ENCODE measurements at regions of chr11 and their contacts with region 1.

Region 1: GRCh38 chr11:9351321-9351881 is 33.1 kb upstream of the IPO7 start:
- DNase-seq: no peak

Region 2: DNA sequence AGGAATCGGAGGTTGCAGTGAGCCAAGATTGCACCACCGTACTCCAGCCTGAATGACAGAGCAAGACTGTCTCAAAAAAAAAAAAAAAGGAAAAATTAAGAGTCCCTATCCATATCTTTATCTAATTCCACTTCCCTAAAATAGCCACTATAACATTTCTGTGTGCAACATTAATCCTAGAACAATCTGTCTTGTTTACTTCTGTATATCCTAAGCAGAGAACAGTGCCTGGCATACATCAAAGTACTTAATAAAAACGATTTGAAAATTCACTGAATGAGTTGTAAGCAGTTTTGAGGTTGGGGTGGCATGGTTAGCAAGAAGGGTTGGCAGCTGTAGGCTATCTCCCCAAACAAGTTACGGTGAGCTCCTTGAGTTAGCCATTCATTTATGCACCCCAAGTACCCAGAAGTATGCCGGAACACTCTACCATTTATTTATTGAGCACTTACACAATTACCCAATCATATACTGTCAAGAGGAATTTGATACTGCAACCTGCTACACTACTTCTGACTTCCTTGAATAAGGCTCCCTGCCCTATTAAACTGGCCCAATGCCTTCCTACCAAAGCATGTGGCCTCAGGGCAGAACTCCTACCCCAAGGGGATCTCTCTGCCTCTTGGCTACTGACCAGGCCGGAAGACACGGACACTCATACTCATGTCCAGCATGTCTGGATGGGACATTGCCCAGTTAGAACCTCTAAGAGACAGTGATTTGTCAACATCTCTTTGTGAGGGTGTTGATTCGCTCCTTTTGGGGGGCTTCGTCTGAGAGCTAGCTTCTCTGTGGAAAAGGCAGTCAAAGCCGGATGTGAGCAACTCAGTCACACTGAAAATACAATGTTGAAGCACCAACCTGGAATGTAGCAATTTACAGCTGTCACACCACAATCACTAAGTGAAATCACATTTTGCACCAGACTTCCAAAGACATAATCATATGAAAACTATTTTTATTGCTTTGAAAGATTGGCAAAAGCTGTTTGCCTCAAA is 20.7 kb before region 1 on chr11:
- CTCF ChIA-PET with region 1: no interaction called
- POLR2A ChIA-PET with region 1: no interaction called
- DNase-seq: no peak

Region 3: DNA sequence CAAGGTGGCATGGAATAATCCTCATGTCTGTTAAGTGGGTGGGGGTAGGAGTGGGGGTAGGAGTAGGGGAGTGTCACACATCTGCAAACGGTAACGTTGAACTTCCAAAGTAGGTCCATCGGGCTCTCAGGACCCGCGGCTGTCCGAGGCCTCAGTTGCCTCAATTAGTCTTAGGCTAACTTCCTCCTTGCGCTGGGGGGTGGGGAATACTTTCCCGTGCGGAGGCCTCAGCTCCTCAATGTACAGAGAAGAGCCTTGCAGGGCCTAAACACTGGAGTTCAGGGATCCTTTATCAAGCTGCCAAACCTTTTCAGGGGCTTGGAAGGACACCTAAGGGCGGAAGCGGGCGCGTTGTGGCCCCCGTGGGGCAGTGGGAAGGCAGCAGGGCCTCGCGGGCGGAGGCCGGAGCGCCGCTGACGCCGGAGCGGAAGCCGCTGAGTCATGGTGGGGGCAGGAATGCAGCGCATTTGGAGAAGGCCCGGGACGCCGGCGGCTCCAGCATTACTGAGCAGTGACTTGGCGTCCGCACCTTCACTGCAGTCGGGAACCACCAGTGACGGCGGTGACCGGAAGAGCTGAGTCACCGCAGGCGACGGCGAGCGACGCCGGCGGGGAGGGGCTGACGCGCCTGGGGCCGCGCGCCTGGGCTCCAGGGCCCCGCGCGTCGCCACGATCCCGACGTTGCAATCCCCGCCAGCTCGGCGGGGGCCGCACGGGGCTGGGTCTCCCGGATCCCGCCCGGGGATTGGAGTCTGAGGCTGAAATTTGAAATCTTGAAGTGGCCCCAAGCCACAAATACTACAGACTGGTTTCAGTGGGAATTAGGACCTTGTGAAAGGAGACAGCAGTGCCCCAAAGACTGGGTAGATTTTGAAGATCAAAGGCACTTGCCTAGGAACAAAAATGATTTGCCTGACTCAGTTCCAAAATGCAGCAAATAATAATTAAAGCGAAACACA is 12.8 kb after region 1 on chr11:
- CTCF ChIA-PET with region 1: no interaction called
- POLR2A ChIA-PET with region 1: interaction called, 10 read pairs
- DNase-seq: peak; percentile 85

Region 4: GRCh38 chr11:9396752-9397151 is 45.4 kb after region 1 on chr11:
- CTCF ChIA-PET with region 1: no interaction called
- POLR2A ChIA-PET with region 1: no interaction called
- DNase-seq: no peak

Region 5: GRCh38 chr11:9448576-9449352 is 97.4 kb after region 1 on chr11:
- CTCF ChIA-PET with region 1: no interaction called
- POLR2A ChIA-PET with region 1: no interaction called
- DNase-seq: no peak